Thyroid gland (tissue), 4 donors: ENCODE measurements at regions of chr11 and their contacts with region 1.

Region 1: DNA sequence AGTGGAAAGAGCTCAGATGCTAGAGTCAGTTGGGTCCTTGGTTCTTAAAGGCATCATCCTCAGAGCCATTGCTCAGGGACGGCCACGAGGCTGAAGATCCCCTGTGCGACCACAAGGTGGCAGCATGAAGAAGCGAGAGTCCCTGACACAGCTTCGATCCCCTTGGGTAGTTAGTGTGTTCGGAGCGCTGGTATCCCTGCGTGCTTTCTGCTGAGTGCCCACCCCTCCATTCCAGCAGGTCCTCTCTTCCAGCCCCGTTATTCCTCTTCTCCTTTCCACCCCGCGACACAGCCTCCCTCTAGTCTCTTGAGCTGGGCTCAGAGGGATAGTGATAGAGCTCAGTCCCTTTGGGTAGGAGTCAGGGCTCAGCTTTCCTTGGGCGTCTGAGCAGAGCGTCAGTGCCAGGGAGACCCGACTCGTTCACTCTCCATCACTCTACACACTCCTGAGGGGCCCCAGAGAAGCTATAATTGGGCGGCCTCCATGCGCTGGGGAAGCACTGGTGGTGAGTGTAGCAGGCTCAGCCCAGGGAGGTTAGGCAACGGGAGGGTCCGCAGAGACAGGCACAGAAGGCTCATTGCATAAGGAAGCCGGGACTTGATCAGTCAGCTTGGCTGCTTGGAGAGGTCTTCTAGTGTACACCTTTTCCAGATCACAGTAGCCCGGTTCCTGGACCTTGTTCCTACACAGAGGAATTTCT is at the start of gene OR51D1:
- DNase-seq: peak; percentile 73 to 80
- H3K4me3 ChIP-seq: no peak within 1 kb of the TSS
- H3K27ac ChIP-seq: no peak within 1 kb of the TSS
- H3K4me1 ChIP-seq: no peaks in the 10 kb centered on the region
- H3K27me3 ChIP-seq: no peaks in the 10 kb centered on the region
- CTCF ChIP-seq: peak; percentile 73 to 89 (median 80)
- POLR2A ChIP-seq: no peak
- total RNA-seq, gene OR51D1: not detected

Region 2: GRCh38 chr11:5004424-5005274 is 367.5 kb after region 1 on chr11:
- intact Hi-C with region 1: loop called (anchors 5 kb)
- DNase-seq: peak; percentile 74 to 79
- H3K4me3 ChIP-seq: no peak overlapping the region
- H3K27ac ChIP-seq: no peak overlapping the region
- H3K4me1 ChIP-seq: no peaks in the 10 kb centered on the region
- H3K27me3 ChIP-seq: no peaks in the 10 kb centered on the region
- CTCF ChIP-seq: peak in 4 of 6 experiments; percentile 58 to 63 (median 62)
- POLR2A ChIP-seq: no peak